Activated CD4-positive, alpha-beta memory T cell treated with anti-CD3 and anti-CD28 coated beads for 36 hours (primary cell): ENCODE measurements at regions of chr3 and their contacts with region 1.

Region 1: GRCh38 chr3:48952510-48953118 is 34.0 kb downstream of the ARIH2 start:
- DNase-seq: peak; percentile 66
- H3K4me3 Mint-ChIP-seq: no peak overlapping the region
- H3K27ac Mint-ChIP-seq: no peak overlapping the region
- H3K4me1 Mint-ChIP-seq: peaks cover 18% of the 10 kb centered on the region
- H3K27me3 Mint-ChIP-seq: no peaks in the 10 kb centered on the region

Region 2: GRCh38 chr3:48739955-48740823 is 212.4 kb before region 1 on chr3:
- CTCF ChIA-PET with region 1: interaction called, 7 read pairs
- POLR2A ChIA-PET with region 1: no interaction called
- intact Hi-C with region 1: loop called (anchors 10 kb)
- DNase-seq: peak; percentile 74
- H3K4me3 Mint-ChIP-seq: no peak overlapping the region
- H3K27ac Mint-ChIP-seq: no peak overlapping the region
- H3K4me1 Mint-ChIP-seq: no peaks in the 10 kb centered on the region
- H3K27me3 Mint-ChIP-seq: no peaks in the 10 kb centered on the region